Activated CD8-positive, alpha-beta T cell treated with anti-CD3 and anti-CD28 coated beads for 36 hours (primary cell): ENCODE measurements at regions of chr2 and their contacts with region 1.

Region 1: GRCh38 chr2:62287899-62288880 is 92.3 kb downstream of the B3GNT2 start:
- DNase-seq: peak; percentile 89
- ATAC-seq: peak; percentile 78
- H3K4me3 Mint-ChIP-seq: no peak overlapping the region
- H3K27ac Mint-ChIP-seq: peak overlapping the region; percentile 7
- H3K4me1 Mint-ChIP-seq: peaks cover 26% of the 10 kb centered on the region
- H3K27me3 Mint-ChIP-seq: no peaks in the 10 kb centered on the region
- CTCF ChIP-seq: no peak

Region 2: DNA sequence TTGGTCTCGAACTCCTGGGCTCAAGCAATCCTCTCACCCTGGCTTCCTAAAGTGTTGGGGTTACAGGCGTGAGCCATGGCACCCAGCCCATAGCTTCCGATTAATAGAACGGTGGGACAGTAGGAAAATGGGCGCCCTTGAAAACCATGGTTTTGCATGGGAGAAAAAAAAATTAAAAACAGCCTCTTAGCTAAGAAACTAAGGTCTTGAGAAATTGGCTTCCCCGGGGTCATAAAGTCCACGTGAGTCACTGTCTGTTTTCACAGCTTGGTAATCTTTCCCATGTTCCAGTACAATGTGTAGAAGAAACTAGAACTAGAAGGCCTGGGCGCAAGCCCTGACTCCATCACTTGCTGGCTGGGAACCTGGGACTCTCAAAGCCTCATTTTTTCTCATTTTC is 71.6 kb before region 1 on chr2:
- CTCF ChIA-PET with region 1: no interaction called
- POLR2A ChIA-PET with region 1: no interaction called
- intact Hi-C with region 1: no loop called
- DNase-seq: peak; percentile 37
- ATAC-seq: no peak
- H3K4me3 Mint-ChIP-seq: no peak overlapping the region
- H3K27ac Mint-ChIP-seq: peak overlapping the region; percentile 76
- H3K4me1 Mint-ChIP-seq: peaks cover 98% of the 10 kb centered on the region
- H3K27me3 Mint-ChIP-seq: no peaks in the 10 kb centered on the region
- CTCF ChIP-seq: no peak

Region 3: GRCh38 chr2:62277688-62278087 is 10.5 kb before region 1 on chr2:
- CTCF ChIA-PET with region 1: no interaction called
- POLR2A ChIA-PET with region 1: no interaction called
- intact Hi-C with region 1: no loop called
- DNase-seq: no peak
- ATAC-seq: no peak
- H3K4me3 Mint-ChIP-seq: no peak overlapping the region
- H3K27ac Mint-ChIP-seq: no peak overlapping the region
- H3K4me1 Mint-ChIP-seq: no peaks in the 10 kb centered on the region
- H3K27me3 Mint-ChIP-seq: no peaks in the 10 kb centered on the region
- CTCF ChIP-seq: no peak

Region 4: DNA sequence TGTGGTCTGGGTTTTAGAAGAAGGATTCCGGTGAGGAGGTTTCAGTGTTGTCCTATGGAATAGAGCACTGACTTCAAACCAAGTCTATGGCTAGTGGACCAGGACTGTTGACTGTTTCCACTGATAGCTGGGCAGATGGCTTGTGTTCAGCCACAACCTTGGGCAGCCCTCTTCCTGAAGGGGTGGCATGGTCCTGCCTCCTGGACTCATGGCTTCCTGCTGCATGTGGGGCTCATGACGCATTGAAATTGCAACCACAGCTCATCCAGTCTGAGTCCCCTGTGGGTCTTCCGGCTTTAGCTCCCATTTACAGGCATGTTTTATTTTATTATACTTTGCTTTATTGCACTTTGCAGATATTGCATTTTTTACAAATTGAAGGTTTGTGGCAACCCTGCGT is 12.7 kb after region 1 on chr2:
- CTCF ChIA-PET with region 1: interaction called, 18 read pairs
- POLR2A ChIA-PET with region 1: interaction called, 3 read pairs
- intact Hi-C with region 1: no loop called
- DNase-seq: no peak
- ATAC-seq: no peak
- H3K4me3 Mint-ChIP-seq: no peak overlapping the region
- H3K27ac Mint-ChIP-seq: peak overlapping the region; percentile 58
- H3K4me1 Mint-ChIP-seq: peaks cover 51% of the 10 kb centered on the region
- H3K27me3 Mint-ChIP-seq: peaks cover 2% of the 10 kb centered on the region
- CTCF ChIP-seq: no peak

Region 5: DNA sequence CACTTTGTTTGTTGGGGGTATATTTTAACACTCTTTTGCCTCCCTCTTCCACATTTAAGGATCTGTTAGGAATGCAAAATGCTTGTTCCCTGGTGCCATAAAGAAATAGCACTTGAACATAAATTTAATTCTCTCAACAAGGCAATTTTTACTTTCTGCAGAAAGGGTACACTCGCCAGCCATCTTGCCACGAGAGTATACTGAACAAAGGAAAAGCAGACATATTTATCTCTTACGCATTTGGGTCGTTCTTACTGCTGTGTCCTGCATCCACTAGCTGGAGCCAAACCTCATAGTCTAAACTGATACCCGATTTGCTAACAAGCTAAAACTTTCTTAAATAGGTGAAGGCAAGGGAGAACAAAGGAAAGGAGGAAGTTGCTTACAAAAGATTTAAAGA is 37.2 kb after region 1 on chr2:
- CTCF ChIA-PET with region 1: no interaction called
- POLR2A ChIA-PET with region 1: no interaction called
- intact Hi-C with region 1: no loop called
- DNase-seq: no peak
- ATAC-seq: no peak
- H3K4me3 Mint-ChIP-seq: no peak overlapping the region
- H3K27ac Mint-ChIP-seq: no peak overlapping the region
- H3K4me1 Mint-ChIP-seq: peaks cover 26% of the 10 kb centered on the region
- H3K27me3 Mint-ChIP-seq: no peaks in the 10 kb centered on the region
- CTCF ChIP-seq: no peak

Region 6: DNA sequence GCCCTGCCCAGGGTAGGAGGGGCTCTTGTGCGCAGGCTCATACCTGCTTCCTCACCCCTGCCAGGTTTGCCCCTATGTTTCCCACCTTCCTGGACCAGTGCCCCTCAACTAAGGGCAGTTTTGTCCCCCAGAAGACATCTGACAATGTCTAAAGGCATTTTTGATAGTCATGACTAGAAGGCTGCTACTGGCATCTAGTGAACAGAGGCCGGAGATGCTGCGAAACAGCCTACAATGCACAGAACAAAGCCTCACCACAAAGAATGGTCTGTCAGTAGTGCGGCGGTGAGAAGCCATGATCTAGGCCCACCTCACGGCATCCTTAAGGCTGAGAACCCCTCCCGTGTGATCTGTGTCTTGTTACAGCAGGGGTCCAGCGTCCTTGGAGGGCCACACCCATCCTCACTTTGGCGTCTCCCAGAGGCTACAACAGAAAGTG is 121.8 kb after region 1 on chr2:
- CTCF ChIA-PET with region 1: no interaction called
- POLR2A ChIA-PET with region 1: no interaction called
- intact Hi-C with region 1: no loop called
- DNase-seq: peak; percentile 27
- ATAC-seq: peak; percentile 32
- H3K4me3 Mint-ChIP-seq: no peak overlapping the region
- H3K27ac Mint-ChIP-seq: no peak overlapping the region
- H3K4me1 Mint-ChIP-seq: peaks cover 12% of the 10 kb centered on the region
- H3K27me3 Mint-ChIP-seq: no peaks in the 10 kb centered on the region
- CTCF ChIP-seq: no peak